ENCODE measurements at regions of chr3 and their contacts with region 1.

Region 1: GRCh38 chr3:43296565-43296964 is 10.2 kb downstream of the SNRK start:
- DNase-seq: peak; percentile 62 to 93 (median 88)
- H3K4me3 ChIP-seq: peak overlapping the region in 6 of 7 experiments; percentile 25 to 65 (median 45)
- H3K27ac ChIP-seq: peak overlapping the region in 1 of 2 experiments; percentile 60
- H3K4me1 ChIP-seq: peaks cover 42 to 68% (median 53%) of the 10 kb centered on the region in 4 experiments
- H3K27me3 ChIP-seq: no peaks in the 10 kb centered on the region

Region 2: DNA sequence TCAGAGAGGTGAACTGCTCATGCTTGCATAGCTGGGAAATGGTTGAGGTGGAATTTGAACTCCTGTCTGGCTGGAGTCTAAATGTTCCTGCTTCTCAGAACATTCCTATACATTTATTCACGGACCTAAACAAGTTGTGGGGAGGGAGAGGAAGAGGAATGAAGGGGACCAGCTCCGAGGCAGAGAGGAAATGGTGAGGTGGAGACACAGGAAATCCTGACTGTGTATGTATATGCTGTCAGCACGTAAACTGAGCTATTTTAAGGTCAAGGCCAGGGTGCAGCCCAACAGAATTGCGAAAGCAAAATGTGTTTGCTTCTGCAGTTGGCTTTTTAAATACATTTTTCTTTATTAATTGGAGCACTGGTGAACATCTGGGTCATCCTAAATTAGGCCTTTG is 116.5 kb before region 1 on chr3:
- CTCF ChIA-PET with region 1: no interaction called
- POLR2A ChIA-PET with region 1: no interaction called
- DNase-seq: peak; percentile 17 to 54 (median 50)
- H3K4me3 ChIP-seq: peak overlapping the region in 6 of 7 experiments; percentile 1 to 55 (median 16)
- H3K27ac ChIP-seq: peak overlapping the region; percentile 4 to 32
- H3K4me1 ChIP-seq: peaks cover 23 to 55% (median 48%) of the 10 kb centered on the region in 4 experiments
- H3K27me3 ChIP-seq: no peaks in the 10 kb centered on the region

Region 3: GRCh38 chr3:43286115-43286840 is 10.3 kb before region 1 on chr3 and contains the start of gene SNRK:
- CTCF ChIA-PET with region 1: interaction called, 19 read pairs
- POLR2A ChIA-PET with region 1: interaction called, 5 read pairs
- DNase-seq: peak; percentile 77 to 86 (median 85)
- H3K4me3 ChIP-seq: peak within 1 kb of the TSS; percentile 55 to 97 (median 85)
- H3K27ac ChIP-seq: peak within 1 kb of the TSS; percentile 77 to 82
- H3K4me1 ChIP-seq: peaks cover 27 to 47% (median 38%) of the 10 kb centered on the region in 4 experiments
- H3K27me3 ChIP-seq: no peaks in the 10 kb centered on the region

Measured in common myeloid progenitor, CD34-positive (primary cell).